WTC11 (cell line): ENCODE measurements at regions of chr12 and their contacts with region 1.

Region 1: GRCh38 chr12:54526812-54527630 is 22.4 kb upstream of the PDE1B start:
- DNase-seq: peak; percentile 92
- ATAC-seq: peak; percentile 92
- H3K4me3 Mint-ChIP-seq: no peak overlapping the region
- H3K27ac Mint-ChIP-seq: no peak overlapping the region
- H3K4me1 Mint-ChIP-seq: peaks cover 12% of the 10 kb centered on the region
- H3K27me3 Mint-ChIP-seq: peaks cover 63% of the 10 kb centered on the region
- CTCF ChIP-seq: peak; percentile 90

Region 2: DNA sequence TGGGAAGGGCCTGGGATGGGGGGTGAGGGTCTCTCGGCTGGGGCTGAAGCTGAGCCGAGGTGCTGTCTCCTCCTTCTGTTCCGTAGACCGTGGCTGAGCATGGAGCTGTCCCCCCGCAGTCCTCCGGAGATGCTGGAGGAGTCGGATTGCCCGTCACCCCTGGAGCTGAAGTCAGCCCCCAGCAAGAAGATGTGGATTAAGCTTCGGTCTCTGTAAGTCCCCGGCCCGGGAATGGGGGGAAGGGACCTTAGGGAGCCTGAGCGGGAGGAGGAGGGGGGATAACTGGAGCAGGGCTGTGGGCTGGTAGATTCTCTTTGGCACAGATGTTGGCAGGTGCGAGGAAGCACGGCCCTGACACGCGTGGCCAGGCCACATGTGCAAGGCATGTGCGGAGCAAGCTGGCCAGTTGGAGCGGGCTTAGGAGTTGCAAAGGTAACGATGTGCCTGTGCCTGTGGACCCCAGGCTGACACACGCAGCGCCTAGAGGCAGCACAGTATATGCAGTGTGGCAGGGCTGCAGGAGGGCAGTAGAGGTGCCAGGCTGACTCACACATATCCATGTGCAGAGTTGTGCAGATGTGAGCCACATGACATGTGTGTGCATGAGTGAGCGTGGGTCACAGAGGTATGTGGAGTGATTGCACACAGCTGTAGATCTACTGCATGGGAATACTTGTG is 22.9 kb after region 1 on chr12:
- CTCF ChIA-PET with region 1: interaction called, 35 read pairs
- POLR2A ChIA-PET with region 1: no interaction called
- DNase-seq: peak; percentile 42
- ATAC-seq: peak; percentile 69
- H3K4me3 Mint-ChIP-seq: peak overlapping the region; percentile 74
- H3K27ac Mint-ChIP-seq: no peak overlapping the region
- H3K4me1 Mint-ChIP-seq: peaks cover 27% of the 10 kb centered on the region
- H3K27me3 Mint-ChIP-seq: no peaks in the 10 kb centered on the region; the same call in 1 of the 2 replicates
- CTCF ChIP-seq: no peak

Region 3: DNA sequence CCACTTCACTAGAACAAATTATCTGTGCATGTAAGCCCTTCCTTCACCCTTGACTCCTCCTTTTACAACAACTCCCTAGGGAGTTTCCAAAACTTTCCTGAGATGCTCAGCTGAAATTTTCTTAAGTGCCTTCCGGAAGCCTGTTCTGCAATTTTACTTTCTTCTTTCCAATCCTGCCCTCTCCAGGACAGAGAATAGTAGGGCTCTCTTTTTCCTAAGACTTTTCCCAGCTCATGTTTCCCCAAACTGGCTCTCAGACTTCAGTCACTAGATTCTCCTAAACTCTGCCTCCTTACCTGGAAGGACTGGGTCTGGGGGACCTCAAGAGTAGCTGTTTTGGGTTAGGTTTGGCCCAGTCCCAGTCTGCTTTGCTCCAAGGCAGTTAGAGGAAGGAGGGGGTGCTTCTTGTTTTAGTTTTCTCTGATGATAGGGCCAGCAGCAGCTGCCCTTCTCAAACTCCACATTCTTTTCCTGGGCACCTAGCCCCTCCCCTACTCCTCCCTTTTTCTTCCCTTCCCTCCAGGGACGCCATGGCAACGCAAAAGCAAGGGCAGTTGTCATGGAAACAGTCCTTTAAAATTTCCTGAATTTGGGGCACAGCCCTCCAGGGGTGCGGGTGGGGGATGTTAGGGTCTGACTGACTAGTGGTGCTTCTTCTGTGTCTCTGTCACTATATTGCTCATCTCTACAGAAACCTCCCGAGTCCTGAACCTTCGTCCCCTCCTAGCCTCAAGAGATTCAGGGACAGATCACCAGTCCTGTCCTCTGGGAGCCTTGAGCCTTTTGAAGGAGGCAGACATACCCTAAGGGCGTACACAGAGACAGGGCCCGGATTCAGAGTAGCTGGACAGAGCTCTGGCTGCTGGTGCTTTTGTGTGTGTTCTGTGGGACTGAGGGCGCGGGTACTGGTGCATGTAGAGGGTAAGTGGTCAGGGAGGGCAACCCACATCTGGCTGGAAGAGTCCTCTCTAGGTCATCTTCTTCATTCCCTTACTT is 44.5 kb after region 1 on chr12:
- CTCF ChIA-PET with region 1: interaction called, 134 read pairs
- POLR2A ChIA-PET with region 1: interaction called, 3 read pairs
- DNase-seq: peak; percentile 54
- ATAC-seq: peak; percentile 54
- H3K4me3 Mint-ChIP-seq: no peak overlapping the region
- H3K27ac Mint-ChIP-seq: no peak overlapping the region
- H3K4me1 Mint-ChIP-seq: peaks cover 28% of the 10 kb centered on the region
- H3K27me3 Mint-ChIP-seq: peaks cover 67% of the 10 kb centered on the region
- CTCF ChIP-seq: no peak

Region 4: GRCh38 chr12:54588110-54588889 is 61.3 kb after region 1 on chr12 and contains the start of gene PPP1R1A:
- CTCF ChIA-PET with region 1: interaction called, 23 read pairs
- POLR2A ChIA-PET with region 1: no interaction called
- DNase-seq: peak; percentile 53
- ATAC-seq: peak; percentile 65
- H3K4me3 Mint-ChIP-seq: peak within 1 kb of the TSS; percentile 73
- H3K27ac Mint-ChIP-seq: no peak within 1 kb of the TSS
- H3K4me1 Mint-ChIP-seq: peaks cover 57% of the 10 kb centered on the region
- H3K27me3 Mint-ChIP-seq: peaks cover 78% of the 10 kb centered on the region
- CTCF ChIP-seq: no peak
- total RNA-seq, gene PPP1R1A: 12.4 to 15.5 TPM (median 13.1 TPM) in 3 replicates

Region 5: GRCh38 chr12:54603173-54603814 is 76.3 kb after region 1 on chr12:
- CTCF ChIA-PET with region 1: interaction called, 16 read pairs
- POLR2A ChIA-PET with region 1: no interaction called
- DNase-seq: peak; percentile 75
- ATAC-seq: peak; percentile 90
- H3K4me3 Mint-ChIP-seq: no peak overlapping the region
- H3K27ac Mint-ChIP-seq: no peak overlapping the region
- H3K4me1 Mint-ChIP-seq: no peaks in the 10 kb centered on the region; the same call in 1 of the 2 replicates
- H3K27me3 Mint-ChIP-seq: peaks cover 45% of the 10 kb centered on the region
- CTCF ChIP-seq: peak; percentile 54; the same call in 1 of the 2 replicates

Region 6: GRCh38 chr12:54689984-54690383 is 163.0 kb after region 1 on chr12:
- CTCF ChIA-PET with region 1: interaction called, 15 read pairs
- POLR2A ChIA-PET with region 1: no interaction called
- DNase-seq: peak; percentile 40
- ATAC-seq: peak; percentile 99
- H3K4me3 Mint-ChIP-seq: no peak overlapping the region
- H3K27ac Mint-ChIP-seq: no peak overlapping the region
- H3K4me1 Mint-ChIP-seq: peaks cover 20% of the 10 kb centered on the region
- H3K27me3 Mint-ChIP-seq: peaks cover 24% of the 10 kb centered on the region
- CTCF ChIP-seq: no peak